Endothelial cell of umbilical vein (primary cell): ENCODE measurements at regions of chr6 and their contacts with region 1.

Region 1: DNA sequence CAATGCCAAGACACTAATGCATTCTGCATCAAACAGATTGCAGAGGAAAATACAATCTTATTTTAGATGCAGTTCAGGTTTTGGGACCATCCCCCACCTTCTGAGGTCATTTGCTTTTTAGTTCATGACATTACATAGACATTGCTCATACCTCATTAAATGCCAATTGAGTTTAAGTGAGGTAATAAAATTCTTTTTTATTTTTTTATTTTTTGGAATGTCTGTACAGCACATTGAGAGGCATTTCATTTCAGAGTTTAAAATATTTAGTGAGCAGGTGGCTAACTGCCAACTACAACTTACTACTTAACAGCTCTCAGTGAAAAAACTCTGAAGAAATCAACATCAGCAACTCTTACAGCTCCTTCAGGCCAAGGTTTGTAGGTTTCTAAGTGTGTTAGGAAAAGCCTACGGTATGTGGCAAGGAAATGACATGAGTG is 482.2 kb upstream of the RNF217 start:
- DNase-seq: peak; percentile 17
- H3K4me3 ChIP-seq: no peak overlapping the region
- H3K27ac ChIP-seq: no peak overlapping the region
- H3K4me1 ChIP-seq: no peaks in the 10 kb centered on the region
- H3K27me3 ChIP-seq: no peaks in the 10 kb centered on the region
- CTCF ChIP-seq: no peak
- POLR2A ChIP-seq: no peak

Region 2: DNA sequence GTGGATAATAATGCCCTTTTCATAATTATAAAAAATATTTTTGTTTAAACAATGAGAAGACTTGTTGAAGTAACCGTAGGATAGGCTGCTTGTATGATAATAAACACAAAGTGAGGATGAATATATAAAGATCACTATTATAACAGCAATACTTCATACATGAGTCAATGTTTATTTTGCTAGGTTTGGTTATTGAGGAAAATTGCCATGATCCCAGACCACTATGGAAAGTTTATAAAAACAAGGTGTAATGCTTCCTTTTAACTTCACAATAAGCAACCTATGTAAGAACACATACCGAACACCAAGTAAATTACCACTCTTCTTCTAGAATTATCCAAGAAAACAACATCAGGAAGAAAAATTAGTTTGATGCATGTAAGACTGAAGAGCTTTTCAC is 13.1 kb before region 1 on chr6:
- CTCF ChIA-PET with region 1: interaction called, 3 read pairs
- POLR2A ChIA-PET with region 1: no interaction called
- dilution Hi-C with region 1: no loop called
- intact Hi-C with region 1: loop called (anchors 2 kb)
- DNase-seq: peak; percentile 77
- H3K4me3 ChIP-seq: no peak overlapping the region
- H3K27ac ChIP-seq: no peak overlapping the region
- H3K4me1 ChIP-seq: peaks cover 8% of the 10 kb centered on the region
- H3K27me3 ChIP-seq: no peaks in the 10 kb centered on the region
- CTCF ChIP-seq: no peak
- POLR2A ChIP-seq: no peak

Region 3: DNA sequence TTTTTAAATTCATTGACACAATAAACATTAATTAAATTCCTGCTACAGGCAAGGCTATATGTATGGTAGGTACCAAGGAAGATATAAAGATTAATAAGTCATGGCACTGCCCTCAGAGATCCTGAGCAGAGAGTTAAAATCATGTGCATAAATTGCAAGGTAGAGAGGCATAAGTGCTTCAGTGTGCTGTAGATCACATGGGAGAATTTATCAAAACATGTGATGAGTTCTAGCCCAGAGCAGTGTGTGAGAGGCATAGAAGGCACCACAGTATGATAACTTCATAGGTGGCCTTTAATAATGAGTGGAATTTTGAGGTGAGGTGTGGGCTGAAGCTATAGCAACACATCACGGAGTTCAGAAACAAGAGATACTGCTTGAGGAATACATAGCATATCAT is 16.3 kb after region 1 on chr6:
- CTCF ChIA-PET with region 1: no interaction called
- POLR2A ChIA-PET with region 1: no interaction called
- dilution Hi-C with region 1: no loop called
- intact Hi-C with region 1: no loop called
- DNase-seq: no peak
- H3K4me3 ChIP-seq: no peak overlapping the region
- H3K27ac ChIP-seq: no peak overlapping the region
- H3K4me1 ChIP-seq: no peaks in the 10 kb centered on the region
- H3K27me3 ChIP-seq: no peaks in the 10 kb centered on the region
- CTCF ChIP-seq: no peak
- POLR2A ChIP-seq: no peak

Region 4: DNA sequence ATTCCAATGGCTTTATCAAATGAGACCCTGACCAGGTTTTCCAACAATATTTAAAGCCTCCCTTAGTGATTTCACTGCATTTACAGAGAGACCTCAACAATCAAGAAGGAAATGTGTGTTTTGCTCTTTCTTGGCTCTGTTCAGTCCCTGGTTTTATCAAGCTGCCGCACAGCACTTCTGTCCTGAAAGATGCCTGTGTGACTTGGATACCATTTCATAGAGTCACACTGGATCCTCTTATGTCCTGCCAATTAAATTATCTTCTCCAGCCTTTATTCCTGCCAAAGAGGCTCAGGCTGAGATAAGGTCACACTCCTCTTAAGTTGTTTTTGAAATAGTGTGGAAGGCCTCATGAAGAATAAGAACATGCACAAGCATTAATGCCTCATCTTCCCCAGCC is 285.3 kb after region 1 on chr6:
- CTCF ChIA-PET with region 1: no interaction called
- POLR2A ChIA-PET with region 1: no interaction called
- dilution Hi-C with region 1: no loop called
- intact Hi-C with region 1: no loop called
- DNase-seq: no peak
- H3K4me3 ChIP-seq: no peak overlapping the region
- H3K27ac ChIP-seq: no peak overlapping the region
- H3K4me1 ChIP-seq: no peaks in the 10 kb centered on the region
- H3K27me3 ChIP-seq: peaks cover 0 to 6% of the 10 kb centered on the region in 2 experiments
- CTCF ChIP-seq: no peak
- POLR2A ChIP-seq: no peak